Mammary epithelial cell (primary cell): ENCODE measurements at regions of chr1 and their contacts with region 1.

Region 1: GRCh38 chr1:67489643-67490042 is 59.4 kb upstream of the SERBP1 start:
- DNase-seq: peak; percentile 19
- H3K4me3 ChIP-seq: no peak overlapping the region
- H3K27ac ChIP-seq: no peak overlapping the region
- H3K4me1 ChIP-seq: no peaks in the 10 kb centered on the region
- H3K27me3 ChIP-seq: no peaks in the 10 kb centered on the region
- CTCF ChIP-seq: peak; percentile 23 to 54

Region 2: DNA sequence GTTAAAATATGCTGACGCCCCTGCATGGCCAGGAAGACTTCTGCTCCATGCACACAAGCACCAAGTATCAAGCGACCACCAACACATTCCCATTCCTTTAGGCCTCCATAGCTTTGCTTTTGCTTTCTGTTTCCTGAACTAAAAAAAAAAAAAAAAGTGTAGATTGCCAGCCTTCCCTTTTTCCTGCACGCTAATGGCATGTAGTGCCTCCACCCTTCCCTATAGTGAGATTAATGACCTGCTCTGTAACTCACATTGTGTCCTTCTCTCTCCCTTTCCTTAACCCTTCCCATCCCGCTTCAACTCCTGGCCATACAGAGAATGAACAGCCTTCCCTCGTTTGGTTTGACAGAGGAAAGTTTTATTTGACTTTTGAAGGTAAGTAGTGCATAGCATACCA is 794.5 kb before region 1 on chr1:
- CTCF ChIA-PET with region 1: no interaction called
- dilution Hi-C with region 1: no loop called
- in situ Hi-C with region 1: no loop called
- intact Hi-C with region 1: no loop called
- DNase-seq: no peak
- H3K4me3 ChIP-seq: no peak overlapping the region
- H3K27ac ChIP-seq: no peak overlapping the region
- H3K4me1 ChIP-seq: no peaks in the 10 kb centered on the region
- H3K27me3 ChIP-seq: no peaks in the 10 kb centered on the region
- CTCF ChIP-seq: no peak

Region 3: GRCh38 chr1:67227196-67227595 is 262.4 kb before region 1 on chr1:
- CTCF ChIA-PET with region 1: no interaction called
- dilution Hi-C with region 1: no loop called
- in situ Hi-C with region 1: loop called in 1 of 2 experiments (anchors 10 kb)
- intact Hi-C with region 1: no loop called
- DNase-seq: peak; percentile 81
- H3K4me3 ChIP-seq: no peak overlapping the region
- H3K27ac ChIP-seq: no peak overlapping the region
- H3K4me1 ChIP-seq: no peaks in the 10 kb centered on the region
- H3K27me3 ChIP-seq: peaks cover 3% of the 10 kb centered on the region
- CTCF ChIP-seq: no peak

Region 4: GRCh38 chr1:67347688-67348472 is 141.8 kb before region 1 on chr1:
- CTCF ChIA-PET with region 1: no interaction called
- dilution Hi-C with region 1: no loop called
- in situ Hi-C with region 1: loop called in 1 of 2 experiments (anchors 10 kb)
- intact Hi-C with region 1: loop called (anchors 1 kb)
- DNase-seq: peak; percentile 85
- H3K4me3 ChIP-seq: peak overlapping the region in 2 of 3 experiments; percentile 5 to 9
- H3K27ac ChIP-seq: peak overlapping the region; percentile 60
- H3K4me1 ChIP-seq: peaks cover 37% of the 10 kb centered on the region
- H3K27me3 ChIP-seq: no peaks in the 10 kb centered on the region
- CTCF ChIP-seq: peak; percentile 81 to 87

Region 5: GRCh38 chr1:67372136-67372535 is 117.5 kb before region 1 on chr1:
- CTCF ChIA-PET with region 1: no interaction called
- dilution Hi-C with region 1: no loop called
- in situ Hi-C with region 1: no loop called
- intact Hi-C with region 1: no loop called
- DNase-seq: peak; percentile 35
- H3K4me3 ChIP-seq: no peak overlapping the region
- H3K27ac ChIP-seq: no peak overlapping the region
- H3K4me1 ChIP-seq: peaks cover 6% of the 10 kb centered on the region
- H3K27me3 ChIP-seq: no peaks in the 10 kb centered on the region
- CTCF ChIP-seq: no peak

Region 6: GRCh38 chr1:67430352-67431155 is 59.1 kb before region 1 on chr1 and contains the start of gene SERBP1:
- CTCF ChIA-PET with region 1: no interaction called
- dilution Hi-C with region 1: no loop called
- in situ Hi-C with region 1: no loop called
- intact Hi-C with region 1: loop called (anchors 1 kb)
- DNase-seq: peak; percentile 97
- H3K4me3 ChIP-seq: peak within 1 kb of the TSS; percentile 83 to 99 (median 93)
- H3K27ac ChIP-seq: peak within 1 kb of the TSS; percentile 94
- H3K4me1 ChIP-seq: peaks cover 21% of the 10 kb centered on the region
- H3K27me3 ChIP-seq: no peaks in the 10 kb centered on the region
- CTCF ChIP-seq: peak in 1 of 2 donors; percentile 0
- total RNA-seq, gene SERBP1: 166 to 276 TPM